ENCODE measurements at regions of chr4 and their contacts with region 1.

Region 1: DNA sequence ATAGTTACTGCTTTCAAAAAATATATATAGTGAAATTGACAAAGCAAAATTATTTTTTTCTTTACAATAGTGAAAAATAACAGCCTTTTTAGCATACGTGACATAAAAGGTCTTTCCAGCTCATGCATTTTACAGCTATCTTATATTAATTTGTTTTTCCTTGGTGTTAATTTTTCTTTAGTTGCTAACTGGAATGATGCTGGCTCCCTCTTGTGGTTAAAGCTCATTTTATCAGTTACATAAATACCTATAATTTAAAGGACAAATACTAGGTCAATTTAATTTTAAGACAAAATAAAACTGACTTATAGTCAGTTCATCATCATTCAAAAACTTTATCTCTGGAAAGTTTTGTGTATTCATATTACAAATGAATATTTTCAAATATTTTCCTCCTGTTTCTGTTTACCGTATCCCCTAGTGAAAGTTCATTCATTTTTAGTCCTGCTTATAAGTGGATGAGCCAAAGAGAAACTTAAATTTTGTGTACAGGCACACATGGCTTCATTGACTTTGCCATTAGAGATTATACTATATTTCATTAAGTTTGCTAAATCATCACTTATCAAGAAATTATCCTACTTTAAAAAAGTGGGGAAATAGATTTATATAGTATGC is 9.9 kb upstream of the ANAPC4 start:
- DNase-seq: no peak
- ATAC-seq: no peak
- H3K4me3 Mint-ChIP-seq: no peak overlapping the region
- H3K27ac Mint-ChIP-seq: no peak overlapping the region
- H3K4me1 Mint-ChIP-seq: peaks cover 11% of the 10 kb centered on the region
- H3K27me3 Mint-ChIP-seq: no peaks in the 10 kb centered on the region
- CTCF ChIP-seq: no peak

Region 2: GRCh38 chr4:25180524-25181131 is 186.5 kb before region 1 on chr4:
- CTCF ChIA-PET with region 1: interaction called, 14 read pairs
- POLR2A ChIA-PET with region 1: no interaction called
- DNase-seq: peak; percentile 28
- ATAC-seq: peak; percentile 93
- H3K4me3 Mint-ChIP-seq: no peak overlapping the region
- H3K27ac Mint-ChIP-seq: no peak overlapping the region
- H3K4me1 Mint-ChIP-seq: no peaks in the 10 kb centered on the region
- H3K27me3 Mint-ChIP-seq: no peaks in the 10 kb centered on the region
- CTCF ChIP-seq: peak; percentile 52

Region 3: DNA sequence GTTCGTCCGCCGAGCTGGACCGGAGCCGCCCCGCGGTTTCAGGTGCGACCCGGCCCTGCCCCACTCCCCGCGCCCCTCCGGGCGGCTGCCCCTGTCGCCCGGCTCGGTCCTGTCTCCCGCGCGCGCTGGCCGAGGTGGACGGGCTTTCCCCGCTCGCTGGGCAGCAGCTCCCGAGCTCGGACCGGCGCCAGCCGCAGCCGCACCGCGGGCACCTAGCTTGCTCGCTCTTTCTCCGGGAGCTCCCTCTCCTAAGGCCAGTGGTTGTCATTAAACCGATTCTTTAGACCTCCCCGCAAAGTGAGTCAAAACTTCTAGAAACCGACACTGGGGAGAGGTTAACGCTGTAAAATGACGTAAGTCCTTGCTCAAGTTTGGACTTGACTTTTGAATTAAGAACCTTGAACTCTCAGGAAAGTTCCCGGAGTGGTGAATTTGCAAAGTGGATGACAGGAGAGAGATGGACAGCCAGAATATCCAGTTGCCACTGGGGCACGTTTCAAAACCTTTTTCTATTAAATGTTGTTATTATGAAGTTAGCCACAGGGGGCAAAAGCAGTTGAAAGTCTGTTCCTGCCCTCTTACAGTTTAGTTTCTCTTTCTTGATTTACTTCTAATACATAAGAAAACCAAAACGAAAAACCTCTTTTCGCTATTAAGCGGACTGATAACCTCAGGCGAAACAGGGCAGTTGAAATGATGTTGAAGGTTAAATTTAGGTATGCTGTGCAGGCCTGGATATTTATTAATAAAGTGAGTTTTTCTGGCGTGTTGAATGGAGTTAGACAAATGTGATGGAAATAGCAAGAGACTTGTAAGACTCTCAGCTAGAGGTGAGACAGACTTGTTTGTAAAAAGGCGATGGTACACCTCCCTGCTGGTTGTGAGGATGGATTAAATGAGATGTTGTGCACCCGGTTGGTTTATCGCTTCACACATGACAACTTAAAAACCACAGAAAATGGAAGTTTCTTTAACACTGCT is 132.4 kb before region 1 on chr4:
- CTCF ChIA-PET with region 1: interaction called, 10 read pairs
- POLR2A ChIA-PET with region 1: no interaction called
- DNase-seq: peak; percentile 44
- ATAC-seq: peak; percentile 59
- H3K4me3 Mint-ChIP-seq: peak overlapping the region; percentile 83
- H3K27ac Mint-ChIP-seq: no peak overlapping the region
- H3K4me1 Mint-ChIP-seq: peaks cover 11% of the 10 kb centered on the region
- H3K27me3 Mint-ChIP-seq: peaks cover 35% of the 10 kb centered on the region
- CTCF ChIP-seq: no peak

Region 4: DNA sequence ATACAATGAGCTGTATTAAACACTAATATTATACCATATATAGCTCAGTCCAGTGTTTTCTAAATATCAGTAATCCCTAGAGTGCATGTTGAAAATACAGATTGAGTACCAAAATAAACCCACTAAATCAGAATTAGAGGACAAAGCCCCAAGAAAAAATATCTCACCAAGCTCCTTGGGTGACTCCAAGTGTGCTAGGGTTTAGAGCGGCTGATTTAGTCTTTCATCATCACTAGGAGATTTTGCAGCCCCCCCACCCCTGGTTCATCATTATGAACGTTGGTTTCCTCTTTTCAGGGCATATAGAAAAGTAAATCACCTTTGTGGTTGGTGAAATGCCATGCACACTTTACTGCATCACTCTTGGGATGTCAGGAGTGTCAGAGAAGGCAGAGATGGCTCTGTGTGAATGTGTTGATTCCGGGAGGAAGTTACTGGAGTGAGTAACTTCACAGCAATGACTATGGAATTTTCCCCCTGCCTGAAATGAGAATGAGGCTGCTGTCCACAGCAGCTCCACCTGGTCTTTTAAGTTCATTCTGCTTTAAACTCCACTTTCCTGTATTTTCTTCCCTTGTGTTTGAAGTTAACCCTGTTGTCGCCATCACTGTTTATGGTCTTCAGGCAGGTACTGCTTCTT is 15.2 kb before region 1 on chr4:
- CTCF ChIA-PET with region 1: interaction called, 11 read pairs
- POLR2A ChIA-PET with region 1: no interaction called
- DNase-seq: no peak
- ATAC-seq: peak; percentile 55; the same call in 1 of the 2 replicates
- H3K4me3 Mint-ChIP-seq: no peak overlapping the region
- H3K27ac Mint-ChIP-seq: no peak overlapping the region
- H3K4me1 Mint-ChIP-seq: peaks cover 14% of the 10 kb centered on the region
- H3K27me3 Mint-ChIP-seq: no peaks in the 10 kb centered on the region
- CTCF ChIP-seq: no peak

Region 5: GRCh38 chr4:25635504-25635903 is 268.4 kb after region 1 on chr4:
- CTCF ChIA-PET with region 1: no interaction called
- POLR2A ChIA-PET with region 1: no interaction called
- DNase-seq: no peak
- ATAC-seq: no peak
- H3K4me3 Mint-ChIP-seq: no peak overlapping the region
- H3K27ac Mint-ChIP-seq: no peak overlapping the region
- H3K4me1 Mint-ChIP-seq: no peaks in the 10 kb centered on the region
- H3K27me3 Mint-ChIP-seq: peaks cover 2% of the 10 kb centered on the region; the same call in 1 of the 2 replicates
- CTCF ChIP-seq: no peak